ENCODE measurements at regions of chr17 and their contacts with region 1.

Region 1: DNA sequence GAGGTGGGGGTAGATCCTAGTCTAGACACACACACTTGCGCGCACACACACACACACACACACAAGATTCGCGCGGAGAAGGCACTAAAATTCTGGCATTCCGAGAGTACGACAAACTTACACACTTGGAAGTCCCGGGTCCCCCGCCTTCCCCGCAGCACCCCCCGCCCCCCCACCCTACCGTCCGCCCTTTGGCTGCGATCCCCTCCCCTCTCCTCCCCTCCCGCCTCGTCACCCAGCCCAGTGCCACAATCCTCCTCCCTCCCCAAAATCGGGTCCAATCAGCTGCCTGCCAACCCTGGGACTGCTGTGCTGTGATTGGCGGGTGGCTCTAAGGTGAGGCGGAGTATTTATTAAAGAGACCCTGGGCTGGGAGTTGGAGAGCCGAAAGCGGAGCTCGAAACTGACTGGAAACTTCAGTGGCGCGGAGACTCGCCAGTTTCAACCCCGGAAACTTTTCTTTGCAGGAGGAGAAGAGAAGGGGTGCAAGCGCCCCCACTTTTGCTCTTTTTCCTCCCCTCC is at the start of gene SOX9:
- DNase-seq: peak; percentile 73
- ATAC-seq: peak; percentile 90
- H3K4me3 ChIP-seq: peak within 1 kb of the TSS; percentile 84
- H3K27ac ChIP-seq: no peak within 1 kb of the TSS; the same call in 1 of the 2 replicates
- H3K4me1 ChIP-seq: peaks cover 5% of the 10 kb centered on the region
- H3K27me3 ChIP-seq: peaks cover 9 to 17% of the 10 kb centered on the region in 2 experiments
- CTCF ChIP-seq: no peak
- EP300 ChIP-seq: no peak; a peak in 1 of 4 replicates
- POLR2A ChIP-seq: peak; percentile 63
- RAD21 ChIP-seq: 0 out of 2 replicates have a peak, but pooled peaks have one; percentile 11
- polyA plus RNA-seq, gene SOX9: 4.5 to 8.6 TPM

Region 2: DNA sequence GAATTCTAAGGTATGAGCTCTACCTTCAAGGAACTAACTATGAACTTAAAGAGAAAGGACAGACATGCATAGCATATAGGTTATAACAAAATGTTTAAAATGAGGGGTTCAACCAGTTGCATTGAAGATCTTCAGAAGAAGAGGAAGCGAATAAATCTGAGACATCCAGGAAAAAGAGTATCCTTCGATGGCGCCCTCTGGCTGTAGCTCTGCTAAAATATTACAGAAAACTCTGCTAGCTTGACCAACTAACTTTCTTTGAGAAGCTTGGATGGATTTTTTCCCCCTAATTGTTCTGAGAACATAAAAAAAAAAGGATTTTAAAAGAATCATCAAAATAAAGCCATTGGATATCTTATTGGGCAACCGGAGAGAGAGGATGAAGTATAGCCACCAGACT is 659.8 kb before region 1 on chr17:
- CTCF ChIA-PET with region 1: no interaction called
- POLR2A ChIA-PET with region 1: no interaction called
- RAD21 ChIA-PET with region 1: no interaction called
- SMC1A ChIA-PET with region 1: no interaction called
- in situ Hi-C with region 1: loop called (anchors 10 kb)
- intact Hi-C with region 1: no loop called
- DNase-seq: no peak
- ATAC-seq: no peak
- H3K4me3 ChIP-seq: no peak overlapping the region
- H3K27ac ChIP-seq: no peak overlapping the region
- H3K4me1 ChIP-seq: no peaks in the 10 kb centered on the region
- H3K27me3 ChIP-seq: no peaks in the 10 kb centered on the region
- CTCF ChIP-seq: peak; percentile 7 to 26 (median 16); a peak in 3 of 6 replicates
- EP300 ChIP-seq: no peak
- POLR2A ChIP-seq: no peak
- RAD21 ChIP-seq: peak; percentile 13; the same call in 1 of the 2 replicates

Region 3: GRCh38 chr17:71885662-71886061 is 235.0 kb before region 1 on chr17:
- CTCF ChIA-PET with region 1: interaction called, 6 read pairs
- POLR2A ChIA-PET with region 1: no interaction called
- RAD21 ChIA-PET with region 1: no interaction called
- SMC1A ChIA-PET with region 1: interaction called, 6 read pairs
- in situ Hi-C with region 1: no loop called
- intact Hi-C with region 1: loop called (anchors 5 kb)
- DNase-seq: no peak
- ATAC-seq: peak; percentile 70
- H3K4me3 ChIP-seq: no peak overlapping the region
- H3K27ac ChIP-seq: no peak overlapping the region
- H3K4me1 ChIP-seq: no peaks in the 10 kb centered on the region
- H3K27me3 ChIP-seq: no peaks in the 10 kb centered on the region
- CTCF ChIP-seq: peak in 1 of 3 experiments; percentile 33; a peak in 2 of 6 replicates
- EP300 ChIP-seq: no peak
- POLR2A ChIP-seq: no peak
- RAD21 ChIP-seq: 0 out of 2 replicates have a peak, but pooled peaks have one; percentile 18

Region 4: GRCh38 chr17:72030067-72030899 is 90.4 kb before region 1 on chr17:
- CTCF ChIA-PET with region 1: interaction called, 11 read pairs
- POLR2A ChIA-PET with region 1: interaction called, 8 read pairs
- RAD21 ChIA-PET with region 1: interaction called, 17 read pairs
- SMC1A ChIA-PET with region 1: interaction called, 12 read pairs
- in situ Hi-C with region 1: loop called (anchors 5 kb)
- intact Hi-C with region 1: loop called (anchors 1 kb)
- DNase-seq: peak; percentile 71
- ATAC-seq: peak; percentile 81
- H3K4me3 ChIP-seq: peak overlapping the region; percentile 80
- H3K27ac ChIP-seq: peak overlapping the region; percentile 91
- H3K4me1 ChIP-seq: peaks cover 45% of the 10 kb centered on the region
- H3K27me3 ChIP-seq: no peaks in the 10 kb centered on the region
- CTCF ChIP-seq: peak; percentile 30 to 48 (median 40); a peak in 4 of 6 replicates
- EP300 ChIP-seq: 0 out of 4 replicates have a peak, but pooled peaks of 1 of the 2 experiments have one; percentile 4
- POLR2A ChIP-seq: peak; percentile 65
- RAD21 ChIP-seq: peak; percentile 25; the same call in 1 of the 2 replicates

Region 5: DNA sequence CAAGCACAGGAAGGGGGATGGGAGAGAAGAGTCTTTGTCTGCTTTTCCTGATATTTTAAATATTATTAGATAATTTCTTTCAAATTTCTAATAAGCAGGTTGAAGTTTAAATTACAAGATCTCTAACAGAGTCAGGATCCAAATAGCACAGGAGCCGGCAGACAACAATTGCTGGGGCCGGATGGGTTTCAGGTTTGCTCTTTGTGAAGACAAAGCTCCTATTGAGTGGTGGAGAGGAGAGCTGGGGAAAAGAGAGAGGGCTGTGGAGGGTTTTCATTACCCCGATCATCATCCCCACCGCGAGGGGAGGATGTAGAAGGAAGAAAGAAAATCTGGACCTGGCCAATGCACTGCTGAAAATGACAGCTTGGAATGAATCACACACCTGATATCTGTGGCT is 197.4 kb after region 1 on chr17:
- CTCF ChIA-PET with region 1: interaction called, 3 read pairs
- POLR2A ChIA-PET with region 1: interaction called, 3 read pairs
- RAD21 ChIA-PET with region 1: interaction called, 13 read pairs
- SMC1A ChIA-PET with region 1: interaction called, 6 read pairs
- in situ Hi-C with region 1: no loop called
- intact Hi-C with region 1: no loop called
- DNase-seq: no peak
- ATAC-seq: peak; percentile 13
- H3K4me3 ChIP-seq: no peak overlapping the region
- H3K27ac ChIP-seq: no peak overlapping the region
- H3K4me1 ChIP-seq: peaks cover 16% of the 10 kb centered on the region
- H3K27me3 ChIP-seq: no peaks in the 10 kb centered on the region
- CTCF ChIP-seq: no peak
- EP300 ChIP-seq: 0 out of 4 replicates have a peak, but pooled peaks of 1 of the 2 experiments have one; percentile 4
- POLR2A ChIP-seq: no peak
- RAD21 ChIP-seq: no peak

Region 6: DNA sequence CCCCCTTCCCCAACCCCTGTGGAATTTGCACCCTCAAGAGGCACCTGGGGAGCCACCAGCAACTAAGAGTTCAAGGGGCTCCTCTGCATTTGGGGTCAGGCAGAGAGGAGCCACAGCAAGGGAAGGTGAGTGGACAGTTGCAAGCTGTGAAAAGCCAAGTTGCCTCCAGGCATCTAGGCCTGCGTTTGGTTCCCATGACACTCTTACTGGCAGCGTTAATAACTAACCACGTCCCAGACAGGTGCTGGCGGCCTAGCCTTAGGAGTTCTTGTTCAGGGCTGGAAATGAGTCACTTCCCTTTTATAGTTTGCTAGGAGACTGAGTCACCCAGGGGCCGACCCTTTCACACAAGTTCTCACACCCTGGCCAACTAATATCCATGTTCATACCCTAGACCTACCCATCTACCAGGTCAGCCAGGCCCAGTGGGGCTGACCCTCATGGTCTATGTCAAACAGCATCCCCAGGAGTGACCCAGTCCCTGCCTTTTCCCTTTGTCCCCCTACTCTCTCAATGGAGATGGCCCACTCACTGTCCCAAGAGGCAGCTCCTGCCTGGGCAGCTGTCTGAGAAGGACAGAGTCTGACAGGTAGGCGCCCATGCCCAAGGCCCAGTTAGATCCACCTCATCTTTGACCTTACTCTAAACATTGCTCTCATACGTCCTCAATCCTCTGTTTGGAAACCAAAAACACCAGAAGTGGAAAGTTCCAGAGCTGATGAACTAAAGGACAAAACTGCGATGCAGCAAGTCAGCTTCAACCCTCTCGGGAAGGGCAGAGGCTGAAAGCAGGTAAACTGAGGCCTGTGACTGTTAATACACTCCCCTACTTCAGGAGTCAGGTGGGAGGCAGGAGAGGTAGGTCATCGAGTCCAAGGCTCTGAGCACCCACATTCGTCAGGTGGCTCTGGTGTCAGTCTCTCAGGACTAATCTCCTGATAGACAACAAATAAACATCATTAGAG is 300.7 kb after region 1 on chr17:
- CTCF ChIA-PET with region 1: interaction called, 3 read pairs
- POLR2A ChIA-PET with region 1: interaction called, 5 read pairs
- RAD21 ChIA-PET with region 1: interaction called, 64 read pairs
- SMC1A ChIA-PET with region 1: interaction called, 16 read pairs
- in situ Hi-C with region 1: loop called (anchors 10 kb)
- intact Hi-C with region 1: loop called (anchors 1 kb)
- DNase-seq: peak; percentile 94
- ATAC-seq: peak; percentile 44
- H3K4me3 ChIP-seq: peak overlapping the region; percentile 42; the same call in 1 of the 2 replicates
- H3K27ac ChIP-seq: peak overlapping the region; percentile 95
- H3K4me1 ChIP-seq: peaks cover 64% of the 10 kb centered on the region
- H3K27me3 ChIP-seq: no peaks in the 10 kb centered on the region
- CTCF ChIP-seq: no peak
- EP300 ChIP-seq: peak; percentile 97
- POLR2A ChIP-seq: peak; percentile 61
- RAD21 ChIP-seq: peak; percentile 12; the same call in 1 of the 2 replicates

Region 7: GRCh38 chr17:72516772-72517399 is 396.2 kb after region 1 on chr17:
- CTCF ChIA-PET with region 1: interaction called, 4 read pairs
- POLR2A ChIA-PET with region 1: interaction called, 3 read pairs
- RAD21 ChIA-PET with region 1: interaction called, 19 read pairs
- SMC1A ChIA-PET with region 1: interaction called, 14 read pairs
- in situ Hi-C with region 1: loop called (anchors 10 kb)
- intact Hi-C with region 1: loop called (anchors 5 kb)
- DNase-seq: no peak
- ATAC-seq: peak; percentile 53
- H3K4me3 ChIP-seq: no peak overlapping the region
- H3K27ac ChIP-seq: peak overlapping the region; percentile 84
- H3K4me1 ChIP-seq: peaks cover 56% of the 10 kb centered on the region
- H3K27me3 ChIP-seq: no peaks in the 10 kb centered on the region
- CTCF ChIP-seq: peak in 2 of 3 experiments; percentile 8 to 37; a peak in 1 of 6 replicates
- EP300 ChIP-seq: no peak
- POLR2A ChIP-seq: no peak
- RAD21 ChIP-seq: no peak

Measured in GM12878 (cell line).